Naive thymus-derived CD4-positive, alpha-beta T cell (primary cell): ENCODE measurements at regions of chr6 and their contacts with region 1.

Region 1: GRCh38 chr6:33344701-33345697 is 27.5 kb upstream of the ZBTB22 start:
- DNase-seq: peak; percentile 28 to 87 (median 82)
- ATAC-seq: peak; percentile 60
- H3K4me3 ChIP-seq: peak overlapping the region; percentile 64
- H3K4me3 Mint-ChIP-seq: peak overlapping the region; percentile 68 to 89 (median 86)
- H3K27ac ChIP-seq: peak overlapping the region; percentile 60
- H3K27ac Mint-ChIP-seq: peak overlapping the region; percentile 88 to 99 (median 96)
- H3K4me1 ChIP-seq: peaks cover 23 to 33% of the 10 kb centered on the region in 2 donors
- H3K4me1 Mint-ChIP-seq: peaks cover 22 to 54% (median 41%) of the 10 kb centered on the region in 7 donors
- H3K27me3 ChIP-seq: no peaks in the 10 kb centered on the region
- H3K27me3 Mint-ChIP-seq: peaks cover 0 to 7% (median 0%) of the 10 kb centered on the region in 5 donors

Region 2: DNA sequence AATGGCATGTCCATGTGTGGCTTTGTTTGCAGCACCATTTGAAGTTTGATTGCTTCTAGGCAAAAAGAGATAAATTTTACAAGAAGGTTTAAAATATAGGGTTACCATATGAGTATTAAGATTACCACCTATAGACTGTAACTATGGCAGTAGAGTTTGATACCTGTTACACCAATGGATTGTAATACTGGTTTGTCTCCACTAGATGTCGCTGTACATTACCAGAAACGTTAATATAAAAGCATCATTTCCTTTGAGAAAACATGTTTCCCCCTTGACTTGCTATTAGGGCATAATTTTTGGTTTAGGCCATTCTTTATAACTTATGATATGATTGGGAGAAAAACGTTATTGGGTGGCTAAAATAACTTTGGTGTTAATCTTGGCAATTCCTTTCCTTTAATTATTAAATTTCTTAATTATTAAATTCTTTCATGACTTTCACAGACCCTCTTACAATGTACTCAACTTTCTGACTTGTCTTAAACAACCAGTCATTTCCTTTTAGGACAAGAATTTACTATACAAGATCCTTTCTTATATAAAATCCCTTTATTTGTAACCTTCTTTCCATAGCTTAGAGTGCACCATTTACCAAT is 226.4 kb before region 1 on chr6:
- CTCF ChIA-PET with region 1: no interaction called
- POLR2A ChIA-PET with region 1: no interaction called
- intact Hi-C with region 1: loop called in 1 of 2 experiments (anchors 1 kb)
- DNase-seq: peak in 7 of 9 donors; percentile 44 to 75 (median 65)
- ATAC-seq: peak; percentile 85
- H3K4me3 ChIP-seq: no peak overlapping the region
- H3K4me3 Mint-ChIP-seq: peak overlapping the region in 1 of 10 donors; percentile 12
- H3K27ac ChIP-seq: no peak overlapping the region
- H3K27ac Mint-ChIP-seq: no peak overlapping the region
- H3K4me1 ChIP-seq: peaks cover 0 to 4% of the 10 kb centered on the region in 2 donors
- H3K4me1 Mint-ChIP-seq: peaks cover 4 to 21% (median 13%) of the 10 kb centered on the region in 7 donors
- H3K27me3 ChIP-seq: peaks cover 0 to 12% of the 10 kb centered on the region in 2 donors
- H3K27me3 Mint-ChIP-seq: peaks cover 40 to 79% (median 45%) of the 10 kb centered on the region in 5 donors

Region 3: GRCh38 chr6:33288921-33289748 is 55.9 kb before region 1 on chr6 and contains the starts of genes PFDN6 and WDR46:
- CTCF ChIA-PET with region 1: no interaction called
- POLR2A ChIA-PET with region 1: interaction called, 30 read pairs
- intact Hi-C with region 1: loop called in 1 of 2 experiments (anchors 1 kb)
- DNase-seq: peak; percentile 55 to 90 (median 87)
- ATAC-seq: peak; percentile 96
- H3K4me3 ChIP-seq: peak within 1 kb of the TSS; percentile 97
- H3K4me3 Mint-ChIP-seq: peak within 1 kb of the TSS; percentile 89 to 99 (median 98)
- H3K27ac ChIP-seq: peak within 1 kb of the TSS; percentile 80
- H3K27ac Mint-ChIP-seq: peak within 1 kb of the TSS; percentile 89 to 98 (median 92)
- H3K4me1 ChIP-seq: peaks cover 19 to 20% of the 10 kb centered on the region in 2 donors
- H3K4me1 Mint-ChIP-seq: peaks cover 32 to 51% (median 45%) of the 10 kb centered on the region in 7 donors
- H3K27me3 ChIP-seq: no peaks in the 10 kb centered on the region
- H3K27me3 Mint-ChIP-seq: no peaks in the 10 kb centered on the region
- total RNA-seq, gene PFDN6: 14.6 to 73.2 (median 35.5) TPM
- total RNA-seq, gene WDR46: 25.3 to 62.7 (median 52.7) TPM

Region 4: DNA sequence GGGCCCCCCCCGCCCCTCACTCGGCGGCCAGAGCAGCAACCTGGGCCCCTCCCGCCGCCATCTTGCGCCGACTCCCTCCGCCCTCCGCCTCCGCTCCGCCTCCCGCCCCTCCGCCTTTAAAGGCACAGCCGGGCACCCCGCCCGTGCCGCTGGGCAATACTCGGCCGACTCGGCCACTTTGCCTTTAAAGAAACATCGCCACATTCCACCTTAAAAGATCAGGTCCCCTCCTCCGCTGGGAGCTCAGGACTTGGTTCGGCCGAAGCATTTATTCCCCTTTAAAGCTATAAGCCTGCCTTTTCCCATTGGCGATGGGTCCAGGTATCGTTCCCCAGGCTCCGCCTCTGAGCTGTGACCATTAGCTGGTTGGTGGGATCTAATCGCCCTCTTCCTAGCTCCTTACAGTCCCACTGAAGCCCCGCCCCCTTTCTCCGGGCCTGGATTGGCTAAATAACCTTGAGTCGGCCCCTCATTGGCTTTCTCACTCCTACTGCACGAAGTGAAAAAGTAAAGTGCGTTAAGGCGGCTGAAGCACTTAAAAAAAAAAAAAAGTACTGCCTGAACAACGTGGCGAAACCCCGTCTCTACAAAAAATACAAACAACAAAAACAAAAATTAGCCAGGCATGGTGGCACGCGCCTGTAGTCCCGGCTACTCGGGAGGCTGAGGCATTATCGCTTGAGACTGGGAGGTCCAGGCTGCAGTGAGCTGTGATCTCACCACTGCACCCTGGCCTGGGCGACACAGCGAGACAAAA is 27.2 kb before region 1 on chr6 and contains the start of gene ZBTB22:
- CTCF ChIA-PET with region 1: interaction called, 30 read pairs
- POLR2A ChIA-PET with region 1: interaction called, 47 read pairs
- intact Hi-C with region 1: loop called (anchors 1 kb)
- DNase-seq: peak; percentile 87 to 97 (median 96)
- ATAC-seq: peak; percentile 73
- H3K4me3 ChIP-seq: peak within 1 kb of the TSS; percentile 97
- H3K4me3 Mint-ChIP-seq: peak within 1 kb of the TSS; percentile 81 to 100 (median 100)
- H3K27ac ChIP-seq: peak within 1 kb of the TSS; percentile 99
- H3K27ac Mint-ChIP-seq: peak within 1 kb of the TSS; percentile 97 to 99 (median 98)
- H3K4me1 ChIP-seq: peaks cover 59 to 62% of the 10 kb centered on the region in 2 donors
- H3K4me1 Mint-ChIP-seq: peaks cover 53 to 85% (median 75%) of the 10 kb centered on the region in 7 donors
- H3K27me3 ChIP-seq: no peaks in the 10 kb centered on the region
- H3K27me3 Mint-ChIP-seq: peaks cover 0 to 2% (median 0%) of the 10 kb centered on the region in 5 donors
- total RNA-seq, gene ZBTB22: 15.5 to 30.1 (median 20.5) TPM

Region 5: GRCh38 chr6:33333666-33334065 is 11.3 kb before region 1 on chr6:
- CTCF ChIA-PET with region 1: interaction called, 3 read pairs
- POLR2A ChIA-PET with region 1: interaction called, 15 read pairs
- intact Hi-C with region 1: no loop called
- DNase-seq: no peak
- ATAC-seq: no peak
- H3K4me3 ChIP-seq: no peak overlapping the region
- H3K4me3 Mint-ChIP-seq: no peak overlapping the region
- H3K27ac ChIP-seq: no peak overlapping the region
- H3K27ac Mint-ChIP-seq: peak overlapping the region in 2 of 9 donors; percentile 5 to 25
- H3K4me1 ChIP-seq: no peaks in the 10 kb centered on the region
- H3K4me1 Mint-ChIP-seq: peaks cover 4 to 24% (median 13%) of the 10 kb centered on the region in 7 donors
- H3K27me3 ChIP-seq: no peaks in the 10 kb centered on the region
- H3K27me3 Mint-ChIP-seq: no peaks in the 10 kb centered on the region